HEK293 (cell line): ENCODE measurements at regions of chr11 and their contacts with region 1.

Region 1: GRCh38 chr11:83156150-83156995 is 558 bp upstream of the PCF11 start:
- H3K4me3 ChIP-seq: peak overlapping the region; percentile 62
- H3K27ac ChIP-seq: peak overlapping the region; percentile 59
- H3K4me1 ChIP-seq: peaks cover 2% of the 10 kb centered on the region; the same call in 1 of the 2 replicates
- CTCF ChIP-seq: no peak

Region 2: DNA sequence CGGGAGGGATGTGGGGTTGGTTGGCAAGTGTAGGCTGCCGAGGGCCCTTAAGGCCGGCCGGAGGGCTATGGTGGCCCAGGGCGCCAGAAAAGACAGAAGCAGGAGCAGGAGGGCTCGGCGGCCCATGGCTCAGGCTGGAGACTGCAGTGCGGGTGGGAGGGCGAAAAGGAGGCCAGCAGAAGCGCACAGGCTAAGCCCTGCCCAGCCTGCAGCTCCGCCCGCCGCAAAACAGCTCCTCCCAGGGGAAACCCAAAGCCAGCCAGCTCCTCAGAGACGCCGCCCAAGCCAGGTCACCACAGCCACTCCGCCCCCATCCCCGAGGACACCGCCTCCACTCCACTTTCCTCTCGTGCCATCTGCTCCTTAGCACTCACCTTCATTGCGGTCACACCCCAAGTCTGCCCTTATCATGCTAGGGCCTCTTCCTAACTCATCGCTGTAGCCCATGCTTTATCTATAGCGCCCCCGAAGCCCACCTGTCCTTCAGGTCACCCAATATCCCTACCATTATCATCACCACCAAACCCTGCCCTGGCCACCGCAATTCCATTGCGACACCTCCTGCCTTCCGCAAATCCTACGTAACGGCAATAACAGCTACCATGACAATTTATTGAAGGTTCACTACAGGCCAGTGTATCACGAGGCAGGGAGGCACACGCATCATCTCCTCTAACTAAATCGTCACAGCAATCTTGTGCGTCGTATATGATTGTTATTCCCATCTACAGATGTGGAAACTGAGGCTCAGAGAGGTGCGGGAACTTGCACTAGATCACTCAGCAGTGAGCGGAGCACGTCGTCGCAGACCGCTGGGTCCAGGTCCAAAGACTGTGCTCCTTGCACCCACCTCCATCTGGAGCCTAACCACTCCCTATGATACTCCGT is 255.9 kb before region 1 on chr11 and contains the start of gene PRCP:
- CTCF ChIA-PET with region 1: interaction called, 4 read pairs
- POLR2A ChIA-PET with region 1: interaction called, 46 read pairs
- H3K4me3 ChIP-seq: peak within 1 kb of the TSS; percentile 53
- H3K27ac ChIP-seq: peak within 1 kb of the TSS; percentile 57; the same call in 1 of the 2 replicates
- H3K4me1 ChIP-seq: peaks cover 4% of the 10 kb centered on the region; the same call in 1 of the 2 replicates
- CTCF ChIP-seq: peak; percentile 74

Region 3: GRCh38 chr11:83071567-83072349 is 84.6 kb before region 1 on chr11 and contains the start of gene RAB30:
- CTCF ChIA-PET with region 1: no interaction called
- POLR2A ChIA-PET with region 1: interaction called, 31 read pairs
- H3K4me3 ChIP-seq: peak within 1 kb of the TSS; percentile 97
- H3K27ac ChIP-seq: peak within 1 kb of the TSS; percentile 71
- H3K4me1 ChIP-seq: peaks cover 3% of the 10 kb centered on the region; the same call in 1 of the 2 replicates
- CTCF ChIP-seq: no peak

Region 4: DNA sequence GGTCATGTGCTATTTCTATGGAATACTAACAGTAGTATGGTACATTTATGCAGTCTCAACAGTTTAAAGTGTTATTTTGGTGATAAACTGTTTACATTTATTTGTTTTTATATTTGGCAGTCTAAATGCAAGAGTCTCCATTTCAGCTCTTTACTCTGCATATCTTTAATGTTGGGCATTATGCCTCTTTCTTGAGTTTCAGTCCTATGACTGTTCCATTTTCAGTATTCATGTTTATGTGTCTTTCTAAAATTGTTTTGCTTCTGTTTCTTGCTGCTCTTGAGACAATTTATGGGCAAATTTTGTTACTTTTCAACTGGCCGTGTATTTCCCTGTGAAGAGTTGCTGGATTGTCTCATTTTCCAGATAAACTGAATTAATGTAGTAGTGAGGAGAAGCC is 78.1 kb before region 1 on chr11:
- CTCF ChIA-PET with region 1: no interaction called
- POLR2A ChIA-PET with region 1: interaction called, 11 read pairs
- H3K4me3 ChIP-seq: no peak overlapping the region
- H3K27ac ChIP-seq: no peak overlapping the region
- H3K4me1 ChIP-seq: no peaks in the 10 kb centered on the region
- CTCF ChIP-seq: no peak

Region 5: DNA sequence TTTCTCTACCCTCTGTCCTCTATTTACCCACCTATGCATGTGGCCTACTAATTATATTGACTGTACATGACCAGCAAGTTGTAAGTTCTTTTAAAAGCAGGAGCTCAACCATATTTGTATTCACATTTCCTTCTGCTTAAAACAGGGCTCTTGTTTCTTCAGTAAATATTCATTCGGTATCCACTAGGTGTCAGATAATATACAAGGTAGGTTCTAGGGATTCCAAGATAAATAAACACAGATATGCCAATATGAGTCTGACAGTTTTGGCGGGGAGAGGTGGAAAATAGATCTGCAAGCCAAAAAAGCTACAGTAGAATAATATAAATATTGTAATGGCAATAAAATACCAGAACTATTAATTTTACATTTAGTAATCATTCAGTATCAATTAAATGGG is 69.3 kb before region 1 on chr11:
- CTCF ChIA-PET with region 1: interaction called, 7 read pairs
- POLR2A ChIA-PET with region 1: interaction called, 18 read pairs
- H3K4me3 ChIP-seq: no peak overlapping the region
- H3K27ac ChIP-seq: no peak overlapping the region
- H3K4me1 ChIP-seq: 0 out of 2 replicates have a peak, but pooled peaks cover 3% of the 10 kb centered on the region
- CTCF ChIP-seq: peak; percentile 30; the same call in 1 of the 2 replicates

Region 6: GRCh38 chr11:83187465-83187864 is 31.1 kb after region 1 on chr11:
- CTCF ChIA-PET with region 1: interaction called, 3 read pairs
- POLR2A ChIA-PET with region 1: interaction called, 11 read pairs
- H3K4me3 ChIP-seq: no peak overlapping the region
- H3K27ac ChIP-seq: no peak overlapping the region
- H3K4me1 ChIP-seq: no peaks in the 10 kb centered on the region
- CTCF ChIP-seq: no peak

Region 7: DNA sequence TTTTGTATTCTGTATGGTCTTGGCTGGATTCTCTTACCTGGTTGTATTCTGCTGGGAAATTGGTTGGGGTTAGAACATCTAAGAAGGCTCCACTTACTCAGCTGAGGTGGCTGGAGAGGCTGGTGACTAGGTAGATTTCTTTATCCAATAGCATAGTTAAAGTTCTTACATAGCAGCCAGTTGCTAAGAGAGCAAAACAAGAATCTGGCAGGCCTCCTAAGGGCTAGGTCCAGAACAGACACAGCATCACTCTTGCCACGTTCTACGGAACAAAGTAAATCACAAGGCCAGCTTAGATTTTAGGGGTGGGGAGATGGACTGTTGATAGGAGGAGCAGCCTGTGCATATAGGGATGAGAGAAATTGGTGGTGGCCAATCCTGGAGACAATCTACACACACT is 271.1 kb after region 1 on chr11:
- CTCF ChIA-PET with region 1: no interaction called
- POLR2A ChIA-PET with region 1: no interaction called
- H3K4me3 ChIP-seq: no peak overlapping the region
- H3K27ac ChIP-seq: no peak overlapping the region
- H3K4me1 ChIP-seq: no peaks in the 10 kb centered on the region; the same call in 1 of the 2 replicates
- CTCF ChIP-seq: no peak